ENCODE measurements at regions of chr17 and their contacts with region 1.

Region 1: GRCh38 chr17:57130761-57131461 is 45.9 kb downstream of the AKAP1 start:
- DNase-seq: peak; percentile 19 to 91
- H3K4me3 ChIP-seq: peak overlapping the region; percentile 23 to 38
- H3K27ac ChIP-seq: no peak overlapping the region
- H3K4me1 ChIP-seq: no peaks in the 10 kb centered on the region
- H3K27me3 ChIP-seq: no peaks in the 10 kb centered on the region
- CTCF ChIP-seq: peak; percentile 65 to 95 (median 87)

Region 2: GRCh38 chr17:56913864-56914640 is 216.9 kb before region 1 on chr17 and contains the start of gene TRIM25:
- intact Hi-C with region 1: no loop called
- DNase-seq: peak; percentile 75 to 96
- H3K4me3 ChIP-seq: peak within 1 kb of the TSS; percentile 91 to 92
- H3K27ac ChIP-seq: peak within 1 kb of the TSS; percentile 87
- H3K4me1 ChIP-seq: peaks cover 0 to 17% of the 10 kb centered on the region in 2 donors
- H3K27me3 ChIP-seq: no peaks in the 10 kb centered on the region
- CTCF ChIP-seq: no peak
- total RNA-seq, gene TRIM25: 65.3 TPM

Region 3: DNA sequence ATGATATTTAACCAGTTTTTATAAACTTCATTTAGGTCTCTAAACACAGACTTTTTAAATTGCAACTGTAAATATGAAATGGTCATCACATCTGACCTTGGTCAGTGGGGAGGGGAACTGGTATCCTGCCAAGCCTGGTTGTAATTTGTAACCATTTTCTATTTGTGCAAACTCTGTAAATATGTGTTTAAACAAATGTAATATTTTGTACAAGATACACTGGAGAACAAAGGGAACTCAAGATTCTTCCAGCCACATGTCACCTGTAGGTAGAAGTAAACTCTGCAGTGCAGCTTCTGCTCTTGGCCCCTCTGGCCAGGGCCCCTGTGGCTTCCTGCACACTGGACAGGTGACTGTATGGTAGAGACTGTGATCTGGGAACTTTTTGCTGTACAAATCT is 10.1 kb before region 1 on chr17:
- intact Hi-C with region 1: no loop called
- DNase-seq: no peak
- H3K4me3 ChIP-seq: no peak overlapping the region
- H3K27ac ChIP-seq: no peak overlapping the region
- H3K4me1 ChIP-seq: no peaks in the 10 kb centered on the region
- H3K27me3 ChIP-seq: no peaks in the 10 kb centered on the region
- CTCF ChIP-seq: no peak

Region 4: GRCh38 chr17:57243171-57243948 is 112.4 kb after region 1 on chr17:
- intact Hi-C with region 1: loop called (anchors 5 kb)
- DNase-seq: peak in 1 of 2 donors; percentile 81
- H3K4me3 ChIP-seq: no peak overlapping the region
- H3K27ac ChIP-seq: no peak overlapping the region
- H3K4me1 ChIP-seq: peaks cover 0 to 2% of the 10 kb centered on the region in 2 donors
- H3K27me3 ChIP-seq: no peaks in the 10 kb centered on the region
- CTCF ChIP-seq: peak; percentile 93 to 98 (median 95)

Region 5: DNA sequence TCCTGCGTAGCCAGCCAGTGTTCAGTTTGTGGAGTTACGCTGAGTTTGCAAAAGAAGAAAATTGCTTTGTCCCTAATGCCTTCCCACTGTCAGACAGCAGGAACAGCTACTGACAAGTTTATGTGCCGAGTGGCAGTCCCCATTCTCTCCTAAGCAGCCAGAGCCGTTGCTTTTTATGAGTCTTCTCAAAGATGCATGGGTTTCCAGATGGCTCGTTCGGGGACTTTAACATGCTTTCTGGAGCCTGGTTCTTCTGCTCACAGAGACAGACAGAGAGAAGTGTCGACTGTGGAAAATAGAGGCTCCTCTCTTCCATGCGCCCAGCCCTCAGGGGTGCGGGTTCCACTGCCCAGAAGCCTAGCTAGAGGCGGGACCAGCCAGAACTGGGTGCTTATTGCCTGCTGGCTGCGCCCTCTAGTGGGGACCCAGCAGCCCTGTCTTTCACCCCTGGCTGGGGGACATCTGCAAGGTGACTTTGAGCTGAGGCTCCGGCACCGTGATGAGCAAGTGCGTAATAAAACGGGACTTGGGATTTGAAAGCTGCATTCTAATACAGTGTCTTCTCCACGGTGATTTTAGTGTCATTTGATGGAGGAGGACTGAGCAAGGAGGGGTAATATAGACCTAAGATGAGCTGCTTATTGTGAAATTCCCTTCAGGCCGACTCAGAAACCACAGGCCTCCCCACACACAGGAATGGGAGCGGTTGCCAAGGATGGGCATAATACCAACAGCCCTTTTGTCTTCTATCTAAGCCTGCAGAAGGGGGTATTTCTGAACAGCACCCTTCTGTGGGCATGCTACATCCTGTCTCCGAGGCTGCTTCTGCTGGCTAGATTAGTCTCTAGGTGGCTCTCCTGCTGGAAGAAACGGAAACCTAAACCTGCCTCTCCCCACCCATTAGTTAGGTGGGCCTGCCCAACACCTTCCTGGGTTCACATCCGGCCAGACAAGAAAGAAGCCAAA is 541.0 kb after region 1 on chr17:
- intact Hi-C with region 1: loop called (anchors 1 kb)
- DNase-seq: peak in 1 of 2 donors; percentile 80
- H3K4me3 ChIP-seq: no peak overlapping the region
- H3K27ac ChIP-seq: no peak overlapping the region
- H3K4me1 ChIP-seq: peaks cover 0 to 4% of the 10 kb centered on the region in 2 donors
- H3K27me3 ChIP-seq: no peaks in the 10 kb centered on the region
- CTCF ChIP-seq: peak; percentile 86 to 96 (median 95)

Region 6: DNA sequence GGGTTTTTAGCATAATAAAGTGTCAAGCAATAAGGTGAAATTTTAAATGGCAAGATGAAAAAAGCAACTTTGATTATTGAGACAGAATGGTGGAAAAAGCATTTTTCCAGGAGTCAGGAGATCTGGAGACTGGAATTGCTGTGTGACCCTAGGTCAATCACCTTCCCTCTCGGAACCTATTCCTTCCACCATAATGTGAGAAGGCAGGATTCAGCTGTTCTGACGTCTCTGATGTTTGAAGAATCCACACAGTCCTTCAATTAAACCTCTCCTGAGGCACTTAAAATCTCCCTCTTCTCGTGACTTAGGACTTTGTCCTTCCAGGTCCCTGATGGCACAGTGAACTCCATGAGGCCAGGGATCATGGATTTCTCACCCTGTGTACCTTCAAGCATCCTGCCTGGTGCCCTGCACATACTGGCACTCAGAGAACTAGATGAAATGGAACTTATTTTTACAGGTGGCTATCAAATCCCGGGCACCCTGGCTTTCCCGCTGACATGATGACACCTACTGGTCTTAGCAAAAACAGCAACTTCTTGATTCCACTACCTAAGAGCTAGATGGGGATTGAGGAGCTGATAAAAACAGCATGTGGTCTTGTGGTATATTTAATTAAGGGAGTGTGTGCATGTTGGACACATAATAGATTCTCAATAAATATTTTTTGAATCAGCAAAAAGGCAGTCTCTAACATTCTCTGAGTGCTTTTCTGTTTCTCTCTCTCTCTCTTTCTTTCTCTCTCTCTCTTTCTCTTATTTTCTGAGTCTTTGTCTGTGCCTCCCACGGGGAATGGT is 616.5 kb after region 1 on chr17:
- intact Hi-C with region 1: loop called (anchors 1 kb)
- DNase-seq: no peak
- H3K4me3 ChIP-seq: no peak overlapping the region
- H3K27ac ChIP-seq: no peak overlapping the region
- H3K4me1 ChIP-seq: no peaks in the 10 kb centered on the region
- H3K27me3 ChIP-seq: no peaks in the 10 kb centered on the region
- CTCF ChIP-seq: peak; percentile 50 to 68 (median 54)

Region 7: GRCh38 chr17:57833179-57833939 is 702.4 kb after region 1 on chr17:
- intact Hi-C with region 1: loop called (anchors 5 kb)
- DNase-seq: peak in 1 of 2 donors; percentile 85
- H3K4me3 ChIP-seq: peak overlapping the region; percentile 51 to 60
- H3K27ac ChIP-seq: peak overlapping the region; percentile 83 to 88
- H3K4me1 ChIP-seq: peaks cover 10 to 19% of the 10 kb centered on the region in 2 donors
- H3K27me3 ChIP-seq: no peaks in the 10 kb centered on the region
- CTCF ChIP-seq: peak; percentile 86 to 93 (median 92)

Region 8: DNA sequence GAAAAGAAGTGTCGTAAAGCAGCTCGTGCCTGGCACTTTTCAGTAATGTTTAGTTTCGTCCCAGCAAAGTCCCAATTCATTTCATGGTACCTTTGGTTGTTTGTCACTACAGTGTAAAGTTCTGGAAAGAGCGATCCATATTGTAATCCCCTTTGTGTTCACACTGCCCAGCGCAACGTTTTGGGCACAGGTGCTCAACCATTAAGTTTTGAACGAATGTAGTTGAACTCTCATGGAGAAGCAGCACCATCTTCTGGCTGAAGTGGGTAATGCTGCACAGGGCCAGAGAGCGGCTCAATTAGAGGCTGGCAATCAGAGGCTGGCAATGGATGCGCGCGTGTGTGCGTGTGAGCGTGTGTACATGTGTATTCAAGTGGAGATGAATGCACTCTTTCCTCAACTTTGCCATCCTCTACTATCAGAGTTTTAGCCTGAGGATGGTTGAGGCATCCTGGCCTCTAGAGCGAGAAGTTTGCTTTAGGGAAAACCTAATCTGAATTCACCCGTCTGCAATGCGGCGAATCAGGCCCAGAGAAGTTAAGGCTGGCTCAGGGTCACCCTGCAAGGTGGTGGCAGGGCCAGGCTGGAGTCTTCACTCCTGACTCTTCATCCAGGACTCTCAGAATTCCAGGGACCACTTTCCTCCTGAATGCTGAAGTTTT is 982.2 kb after region 1 on chr17:
- intact Hi-C with region 1: loop called (anchors 2 kb)
- DNase-seq: peak; percentile 17 to 87
- H3K4me3 ChIP-seq: no peak overlapping the region
- H3K27ac ChIP-seq: no peak overlapping the region
- H3K4me1 ChIP-seq: no peaks in the 10 kb centered on the region
- H3K27me3 ChIP-seq: no peaks in the 10 kb centered on the region
- CTCF ChIP-seq: peak; percentile 88 to 98 (median 90)

Measured in ascending aorta (tissue), 2 donors.